GM12878 (cell line): ENCODE measurements at regions of chr12 and their contacts with region 1.

Region 1: GRCh38 chr12:11836282-11837151 is 187.0 kb downstream of the ETV6 start:
- DNase-seq: peak; percentile 99
- ATAC-seq: peak; percentile 89
- H3K4me3 ChIP-seq: no peak overlapping the region
- H3K27ac ChIP-seq: peak overlapping the region; percentile 97
- H3K4me1 ChIP-seq: peaks cover 76% of the 10 kb centered on the region
- H3K27me3 ChIP-seq: no peaks in the 10 kb centered on the region
- CTCF ChIP-seq: no peak
- EP300 ChIP-seq: peak; percentile 90 to 99
- POLR2A ChIP-seq: peak; percentile 68
- RAD21 ChIP-seq: peak; percentile 25; the same call in 1 of the 2 replicates

Region 2: DNA sequence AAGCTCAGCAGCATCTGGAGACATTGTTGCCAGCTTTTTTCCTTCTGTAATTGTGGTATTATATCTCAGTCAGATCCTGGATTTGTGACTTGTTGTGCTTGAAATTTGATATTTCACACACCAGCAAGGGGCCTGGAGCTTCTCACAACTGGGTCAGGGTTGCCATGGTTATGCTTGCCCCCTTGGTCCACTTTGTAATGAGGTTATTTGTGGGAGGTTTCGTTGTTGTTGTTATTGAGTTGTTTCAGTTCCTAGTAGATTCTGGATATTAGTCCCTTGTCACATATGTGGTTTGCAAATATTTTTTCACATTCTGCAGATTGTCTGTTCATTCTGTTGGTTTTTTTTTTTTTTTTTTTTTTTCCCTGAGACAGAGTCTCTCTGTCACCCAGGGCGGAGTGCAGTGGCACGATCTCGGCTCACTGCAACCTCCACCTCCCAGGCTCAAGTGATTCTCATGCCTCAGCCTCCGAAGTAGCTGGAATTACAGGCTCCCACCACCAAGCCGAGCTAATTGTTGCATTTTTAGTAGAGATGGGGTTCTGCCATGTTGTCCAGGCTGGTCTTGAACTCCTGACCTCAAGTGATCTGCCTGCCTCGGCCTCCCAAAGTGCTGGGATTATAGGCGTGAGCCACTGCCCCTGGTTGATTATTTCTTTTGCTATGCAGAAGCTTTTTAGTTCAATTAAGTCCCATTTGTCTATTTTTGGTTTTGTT is 267.6 kb before region 1 on chr12:
- CTCF ChIA-PET with region 1: no interaction called
- POLR2A ChIA-PET with region 1: no interaction called
- RAD21 ChIA-PET with region 1: no interaction called
- SMC1A ChIA-PET with region 1: interaction called, 3 read pairs
- in situ Hi-C with region 1: loop called (anchors 5 kb)
- intact Hi-C with region 1: loop called (anchors 2 kb)
- DNase-seq: peak; percentile 96
- ATAC-seq: peak; percentile 77
- H3K4me3 ChIP-seq: peak overlapping the region; percentile 48
- H3K27ac ChIP-seq: peak overlapping the region; percentile 98
- H3K4me1 ChIP-seq: peaks cover 46% of the 10 kb centered on the region
- H3K27me3 ChIP-seq: no peaks in the 10 kb centered on the region
- CTCF ChIP-seq: no peak
- EP300 ChIP-seq: peak; percentile 99
- POLR2A ChIP-seq: no peak
- RAD21 ChIP-seq: no peak

Region 3: DNA sequence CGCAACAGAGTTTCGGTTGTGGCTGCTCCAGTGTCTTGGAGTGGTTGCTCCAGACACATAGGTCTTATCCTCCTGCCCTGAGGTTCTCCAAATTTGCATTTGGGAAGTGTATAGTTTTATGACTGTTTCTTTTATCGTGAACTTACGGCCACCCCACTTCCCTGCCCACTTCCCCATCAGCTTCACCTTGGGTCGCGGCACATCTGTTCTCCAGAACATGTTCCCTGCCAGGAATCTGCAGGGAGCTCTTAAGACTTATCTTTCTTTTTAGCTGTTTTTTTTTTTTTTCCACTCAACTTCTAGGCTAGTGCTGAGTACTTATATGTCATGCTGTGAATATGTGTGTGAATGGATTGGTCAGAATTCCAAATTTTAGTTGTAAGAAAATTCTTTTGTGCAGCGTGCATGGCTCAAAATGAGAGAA is 111.6 kb before region 1 on chr12:
- CTCF ChIA-PET with region 1: no interaction called
- POLR2A ChIA-PET with region 1: interaction called, 4 read pairs
- RAD21 ChIA-PET with region 1: interaction called, 9 read pairs
- SMC1A ChIA-PET with region 1: interaction called, 10 read pairs
- in situ Hi-C with region 1: no loop called
- intact Hi-C with region 1: no loop called
- DNase-seq: no peak
- ATAC-seq: no peak
- H3K4me3 ChIP-seq: peak overlapping the region; percentile 8; the same call in 1 of the 2 replicates
- H3K27ac ChIP-seq: peak overlapping the region; percentile 89
- H3K4me1 ChIP-seq: peaks cover 98% of the 10 kb centered on the region
- H3K27me3 ChIP-seq: no peaks in the 10 kb centered on the region
- CTCF ChIP-seq: no peak
- EP300 ChIP-seq: no peak
- POLR2A ChIP-seq: no peak
- RAD21 ChIP-seq: no peak

Region 4: GRCh38 chr12:11746024-11746771 is 90.3 kb before region 1 on chr12:
- CTCF ChIA-PET with region 1: interaction called, 4 read pairs
- POLR2A ChIA-PET with region 1: interaction called, 5 read pairs
- RAD21 ChIA-PET with region 1: interaction called, 4 read pairs
- SMC1A ChIA-PET with region 1: interaction called, 8 read pairs
- in situ Hi-C with region 1: no loop called
- intact Hi-C with region 1: loop called (anchors 1 kb)
- DNase-seq: peak; percentile 93
- ATAC-seq: peak; percentile 57
- H3K4me3 ChIP-seq: peak overlapping the region; percentile 17; the same call in 1 of the 2 replicates
- H3K27ac ChIP-seq: peak overlapping the region; percentile 100
- H3K4me1 ChIP-seq: peaks cover 88% of the 10 kb centered on the region
- H3K27me3 ChIP-seq: no peaks in the 10 kb centered on the region
- CTCF ChIP-seq: no peak
- EP300 ChIP-seq: peak; percentile 91 to 94
- POLR2A ChIP-seq: peak; percentile 46; the same call in 1 of the 2 replicates
- RAD21 ChIP-seq: peak; percentile 12; the same call in 1 of the 2 replicates

Region 5: GRCh38 chr12:11780521-11781101 is 55.9 kb before region 1 on chr12:
- CTCF ChIA-PET with region 1: interaction called, 4 read pairs
- POLR2A ChIA-PET with region 1: interaction called, 4 read pairs
- RAD21 ChIA-PET with region 1: interaction called, 56 read pairs
- SMC1A ChIA-PET with region 1: interaction called, 43 read pairs
- in situ Hi-C with region 1: no loop called
- intact Hi-C with region 1: loop called (anchors 1 kb)
- DNase-seq: peak; percentile 94
- ATAC-seq: peak; percentile 79
- H3K4me3 ChIP-seq: peak overlapping the region; percentile 13; the same call in 1 of the 2 replicates
- H3K27ac ChIP-seq: peak overlapping the region; percentile 95
- H3K4me1 ChIP-seq: peaks cover 67% of the 10 kb centered on the region
- H3K27me3 ChIP-seq: no peaks in the 10 kb centered on the region
- CTCF ChIP-seq: no peak
- EP300 ChIP-seq: peak; percentile 67 to 91; a peak in 2 of 4 replicates
- POLR2A ChIP-seq: peak; percentile 48; the same call in 1 of the 2 replicates
- RAD21 ChIP-seq: 0 out of 2 replicates have a peak, but pooled peaks have one; percentile 3

Region 6: DNA sequence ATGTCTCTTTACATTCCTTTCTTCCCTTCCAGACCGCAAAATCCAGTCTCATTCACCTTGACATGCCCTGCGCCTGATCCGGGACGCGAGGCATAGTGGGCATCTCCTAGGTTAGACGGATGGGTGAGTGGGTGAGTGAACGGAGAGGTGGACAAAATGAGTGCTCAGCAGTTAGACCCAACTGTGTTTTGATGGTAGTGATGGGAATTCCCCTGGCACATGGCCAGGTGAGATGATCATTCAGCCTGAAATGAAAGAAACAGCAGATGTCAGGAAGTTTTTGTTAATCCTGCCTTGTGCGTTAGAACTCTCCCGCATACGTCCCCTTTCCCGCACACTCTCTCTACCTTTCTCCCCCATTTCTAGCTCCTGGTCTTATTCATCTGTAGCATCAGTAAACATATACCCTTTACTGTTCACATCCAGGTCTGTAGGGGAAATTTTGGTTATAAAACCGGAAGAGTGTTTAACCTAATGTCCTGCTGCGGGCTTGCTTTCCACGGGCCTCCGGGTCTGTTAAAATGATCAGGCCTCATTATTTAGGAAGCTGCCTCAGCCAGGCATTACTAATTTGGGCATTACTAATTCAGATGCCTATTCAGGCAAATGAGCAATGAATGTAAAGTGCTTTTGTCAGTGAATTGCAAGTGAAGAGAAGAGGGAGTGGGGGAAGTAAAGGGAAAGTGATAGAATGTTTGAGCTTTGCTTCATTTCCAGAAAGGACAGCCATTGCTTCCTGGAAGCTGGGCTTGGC is 14.3 kb before region 1 on chr12:
- CTCF ChIA-PET with region 1: interaction called, 4 read pairs
- POLR2A ChIA-PET with region 1: interaction called, 8 read pairs
- RAD21 ChIA-PET with region 1: interaction called, 10 read pairs
- SMC1A ChIA-PET with region 1: interaction called, 20 read pairs
- in situ Hi-C with region 1: no loop called
- intact Hi-C with region 1: no loop called
- DNase-seq: peak; percentile 74
- ATAC-seq: peak; percentile 82
- H3K4me3 ChIP-seq: peak overlapping the region; percentile 55; the same call in 1 of the 2 replicates
- H3K27ac ChIP-seq: peak overlapping the region; percentile 83
- H3K4me1 ChIP-seq: peaks cover 42% of the 10 kb centered on the region
- H3K27me3 ChIP-seq: no peaks in the 10 kb centered on the region
- CTCF ChIP-seq: no peak
- EP300 ChIP-seq: peak; percentile 18 to 38; a peak in 1 of 4 replicates
- POLR2A ChIP-seq: peak; percentile 54; the same call in 1 of the 2 replicates
- RAD21 ChIP-seq: no peak

Region 7: GRCh38 chr12:12008931-12009611 is 172.6 kb after region 1 on chr12:
- CTCF ChIA-PET with region 1: interaction called, 28 read pairs
- POLR2A ChIA-PET with region 1: no interaction called
- RAD21 ChIA-PET with region 1: interaction called, 5 read pairs
- SMC1A ChIA-PET with region 1: interaction called, 37 read pairs
- in situ Hi-C with region 1: no loop called
- intact Hi-C with region 1: loop called (anchors 1 kb)
- DNase-seq: peak; percentile 86
- ATAC-seq: peak; percentile 63
- H3K4me3 ChIP-seq: no peak overlapping the region
- H3K27ac ChIP-seq: peak overlapping the region; percentile 90
- H3K4me1 ChIP-seq: peaks cover 57% of the 10 kb centered on the region
- H3K27me3 ChIP-seq: no peaks in the 10 kb centered on the region
- CTCF ChIP-seq: peak; percentile 33 to 45 (median 41); a peak in 5 of 6 replicates
- EP300 ChIP-seq: no peak; a peak in 1 of 4 replicates
- POLR2A ChIP-seq: no peak
- RAD21 ChIP-seq: peak; percentile 71